Sigmoid colon (tissue), 7 donors: ENCODE measurements at regions of chr17 and their contacts with region 1.

Region 1: GRCh38 chr17:49315551-49316257 is 46.3 kb downstream of the ZNF652 start:
- DNase-seq: peak; percentile 89
- H3K4me3 ChIP-seq: no peak overlapping the region
- H3K27ac ChIP-seq: peak overlapping the region in 3 of 4 donors; percentile 23 to 44 (median 38)
- H3K4me1 ChIP-seq: peaks cover 0 to 42% (median 33%) of the 10 kb centered on the region in 4 donors
- H3K27me3 ChIP-seq: no peaks in the 10 kb centered on the region
- CTCF ChIP-seq: peak; percentile 52 to 83 (median 62)
- EP300 ChIP-seq: no peak
- POLR2A ChIP-seq: no peak

Region 2: DNA sequence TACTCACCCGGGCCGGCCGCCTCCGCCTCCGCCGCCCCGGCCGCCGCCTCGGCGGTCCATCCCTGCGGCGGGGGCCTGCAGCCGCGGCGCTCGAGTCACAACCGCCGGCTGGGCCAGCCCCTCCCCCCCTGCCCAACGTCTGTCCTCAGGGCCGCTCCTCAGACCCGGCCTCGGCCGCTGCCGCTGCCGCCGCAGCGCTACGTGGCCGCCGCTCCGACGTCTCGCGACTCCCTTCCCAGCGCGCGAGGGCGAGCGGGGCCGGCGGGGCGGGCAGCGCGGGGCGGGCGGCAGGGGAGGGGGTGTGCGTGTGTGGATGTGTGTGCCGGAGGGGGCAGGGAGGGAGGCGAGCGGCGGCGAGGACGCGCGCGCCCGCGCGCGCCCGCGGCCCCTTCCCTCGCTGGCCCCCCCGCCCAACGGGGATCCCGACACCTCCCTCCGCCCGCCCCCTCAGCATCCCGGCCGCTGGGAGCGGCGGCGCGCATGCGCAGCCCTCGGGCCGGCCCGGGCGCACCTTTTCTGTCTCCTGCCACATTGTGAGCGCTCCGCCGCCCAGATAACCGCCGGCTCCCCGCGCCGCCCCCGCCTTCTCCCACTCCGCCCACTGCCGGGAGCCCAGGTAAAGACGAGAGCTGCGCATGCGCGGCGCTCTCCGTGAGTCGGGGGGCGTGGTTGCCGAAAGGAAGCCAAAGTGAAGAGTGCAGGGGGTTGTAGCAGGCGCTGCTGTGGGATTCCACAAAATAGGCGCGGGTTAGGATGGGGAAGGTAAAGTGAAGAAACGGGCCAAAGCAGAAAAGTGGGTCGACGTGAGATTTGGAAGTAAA is 46.4 kb after region 1 on chr17 and contains the start of gene ZNF652:
- intact Hi-C with region 1: loop called (anchors 5 kb)
- DNase-seq: peak; percentile 95
- H3K4me3 ChIP-seq: peak within 1 kb of the TSS; percentile 90 to 96 (median 94)
- H3K27ac ChIP-seq: peak within 1 kb of the TSS; percentile 94 to 99 (median 96)
- H3K4me1 ChIP-seq: peaks cover 0 to 44% (median 33%) of the 10 kb centered on the region in 4 donors
- H3K27me3 ChIP-seq: no peaks in the 10 kb centered on the region
- CTCF ChIP-seq: no peak
- EP300 ChIP-seq: no peak
- POLR2A ChIP-seq: no peak
- total RNA-seq, gene ZNF652: 83.1 to 134 (median 114) TPM

Region 3: GRCh38 chr17:49390548-49391324 is 75.0 kb after region 1 on chr17:
- intact Hi-C with region 1: loop called (anchors 1 kb)
- DNase-seq: no peak
- H3K4me3 ChIP-seq: no peak overlapping the region
- H3K27ac ChIP-seq: peak overlapping the region; percentile 48 to 80 (median 76)
- H3K4me1 ChIP-seq: peaks cover 0 to 66% (median 53%) of the 10 kb centered on the region in 4 donors
- H3K27me3 ChIP-seq: no peaks in the 10 kb centered on the region
- CTCF ChIP-seq: no peak
- EP300 ChIP-seq: peak in 1 of 4 donors; percentile 17
- POLR2A ChIP-seq: no peak